Activated B cell treated with CpG ODN at 0.5 μM for 24 hours (primary cell): ENCODE measurements at regions of chr3 and their contacts with region 1.

Region 1: DNA sequence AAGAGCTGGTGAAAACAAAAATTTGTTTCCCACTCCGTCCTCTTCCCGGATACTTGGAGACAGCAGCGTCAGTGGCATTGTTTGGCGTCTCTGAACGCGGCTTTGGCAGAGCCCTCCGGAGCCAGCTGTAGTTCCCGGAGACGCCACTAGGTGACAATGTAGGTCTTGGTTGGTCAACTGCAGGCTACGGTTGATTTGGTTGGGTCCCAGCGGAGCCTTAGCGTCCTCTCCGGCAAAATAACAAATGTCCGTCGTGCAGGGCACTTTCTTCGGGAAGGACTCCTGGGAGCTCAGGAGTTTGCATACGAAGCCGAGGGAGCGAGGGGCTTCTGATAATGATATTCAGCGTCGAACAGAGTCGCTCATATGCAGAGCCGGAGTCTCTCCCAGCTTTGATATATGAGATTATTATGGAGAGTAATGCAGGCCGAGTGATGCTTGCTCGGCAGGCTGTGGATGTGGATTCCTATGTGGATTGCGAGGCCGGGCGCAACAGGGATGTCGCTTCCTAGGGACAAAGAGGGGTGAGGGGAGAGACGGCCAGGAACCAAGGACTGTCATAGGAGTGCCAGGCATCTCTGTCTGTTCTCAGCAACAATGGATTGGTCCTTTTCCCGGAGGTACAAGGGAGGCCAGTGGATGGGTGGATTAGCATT is 74.8 kb downstream of the IL20RB start:
- DNase-seq: peak; percentile 61
- ATAC-seq: peak; percentile 85
- H3K4me3 Mint-ChIP-seq: peak overlapping the region; percentile 68
- H3K27ac Mint-ChIP-seq: no peak overlapping the region
- H3K4me1 Mint-ChIP-seq: peaks cover 7% of the 10 kb centered on the region
- H3K27me3 Mint-ChIP-seq: peaks cover 32% of the 10 kb centered on the region
- CTCF ChIP-seq: peak; percentile 97

Region 2: DNA sequence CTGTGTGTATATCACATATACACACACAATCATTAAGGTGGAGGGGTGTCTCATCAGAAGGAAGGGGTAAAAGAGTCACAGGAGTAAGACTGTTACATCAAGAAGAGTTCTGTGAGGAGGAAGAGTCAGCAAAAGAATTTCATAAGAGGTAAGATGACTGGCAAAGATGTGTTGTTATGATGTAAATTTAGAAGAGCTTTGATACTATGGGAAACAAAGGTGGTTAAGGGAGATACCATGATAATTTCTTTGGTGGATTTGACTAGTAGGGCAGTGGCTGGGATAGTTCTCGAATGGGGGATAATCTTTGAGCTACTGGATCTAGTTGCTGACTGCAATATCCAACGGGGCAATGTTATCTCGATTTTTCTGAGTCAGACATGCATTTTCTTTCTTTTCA is 342.0 kb before region 1 on chr3:
- CTCF ChIA-PET with region 1: no interaction called
- POLR2A ChIA-PET with region 1: no interaction called
- intact Hi-C with region 1: no loop called
- DNase-seq: no peak
- ATAC-seq: no peak
- H3K4me3 Mint-ChIP-seq: no peak overlapping the region
- H3K27ac Mint-ChIP-seq: no peak overlapping the region
- H3K4me1 Mint-ChIP-seq: peaks cover 34% of the 10 kb centered on the region
- H3K27me3 Mint-ChIP-seq: no peaks in the 10 kb centered on the region
- CTCF ChIP-seq: no peak

Region 3: DNA sequence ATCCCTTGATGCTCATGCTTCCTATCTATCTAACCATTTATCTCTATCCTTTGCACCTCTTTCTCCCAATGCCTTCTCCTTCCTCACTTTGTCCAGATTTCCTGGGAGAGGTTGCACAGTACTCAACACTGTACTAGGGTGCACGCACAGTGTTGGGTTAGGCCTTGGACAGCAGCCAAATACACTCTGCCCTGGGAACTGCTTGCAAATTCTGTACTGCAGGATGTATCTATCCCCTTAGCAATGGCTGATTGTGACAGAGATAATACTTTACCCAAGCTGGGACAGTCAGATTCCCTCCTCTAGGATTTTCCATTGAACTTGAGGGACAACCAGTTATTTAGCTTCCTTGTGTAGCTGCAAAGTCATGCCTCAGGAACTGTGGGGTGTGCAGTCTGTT is 38.5 kb after region 1 on chr3:
- CTCF ChIA-PET with region 1: no interaction called
- POLR2A ChIA-PET with region 1: no interaction called
- intact Hi-C with region 1: no loop called
- DNase-seq: no peak
- ATAC-seq: no peak
- H3K4me3 Mint-ChIP-seq: no peak overlapping the region
- H3K27ac Mint-ChIP-seq: no peak overlapping the region
- H3K4me1 Mint-ChIP-seq: no peaks in the 10 kb centered on the region
- H3K27me3 Mint-ChIP-seq: peaks cover 17% of the 10 kb centered on the region
- CTCF ChIP-seq: no peak

Region 4: DNA sequence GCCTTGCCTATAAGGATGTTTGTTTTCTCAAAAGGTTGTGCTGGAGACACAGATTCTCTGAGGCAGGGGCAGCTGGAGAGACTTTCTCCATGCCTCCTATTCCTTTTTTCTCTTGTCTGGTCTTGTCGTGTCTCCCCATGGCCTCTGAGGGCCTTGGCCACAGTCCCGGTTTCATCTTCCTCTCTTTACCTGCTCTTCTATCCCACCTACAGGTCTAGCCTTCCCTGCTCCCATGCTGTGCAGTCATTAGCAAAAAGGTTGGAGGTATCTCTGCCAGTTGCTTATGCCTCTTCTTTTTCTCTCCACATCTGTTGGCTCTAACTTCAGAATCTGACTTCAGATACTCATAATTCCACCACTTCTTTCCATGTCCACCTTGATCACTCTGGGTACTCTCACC is 116.3 kb after region 1 on chr3:
- CTCF ChIA-PET with region 1: no interaction called
- POLR2A ChIA-PET with region 1: no interaction called
- intact Hi-C with region 1: no loop called
- DNase-seq: no peak
- ATAC-seq: no peak
- H3K4me3 Mint-ChIP-seq: no peak overlapping the region
- H3K27ac Mint-ChIP-seq: no peak overlapping the region
- H3K4me1 Mint-ChIP-seq: no peaks in the 10 kb centered on the region
- H3K27me3 Mint-ChIP-seq: peaks cover 2% of the 10 kb centered on the region
- CTCF ChIP-seq: no peak

Region 5: GRCh38 chr3:137217733-137218132 is 185.1 kb after region 1 on chr3:
- CTCF ChIA-PET with region 1: no interaction called
- POLR2A ChIA-PET with region 1: no interaction called
- intact Hi-C with region 1: no loop called
- DNase-seq: no peak
- ATAC-seq: no peak
- H3K4me3 Mint-ChIP-seq: no peak overlapping the region
- H3K27ac Mint-ChIP-seq: no peak overlapping the region
- H3K4me1 Mint-ChIP-seq: no peaks in the 10 kb centered on the region
- H3K27me3 Mint-ChIP-seq: no peaks in the 10 kb centered on the region
- CTCF ChIP-seq: no peak

Region 6: DNA sequence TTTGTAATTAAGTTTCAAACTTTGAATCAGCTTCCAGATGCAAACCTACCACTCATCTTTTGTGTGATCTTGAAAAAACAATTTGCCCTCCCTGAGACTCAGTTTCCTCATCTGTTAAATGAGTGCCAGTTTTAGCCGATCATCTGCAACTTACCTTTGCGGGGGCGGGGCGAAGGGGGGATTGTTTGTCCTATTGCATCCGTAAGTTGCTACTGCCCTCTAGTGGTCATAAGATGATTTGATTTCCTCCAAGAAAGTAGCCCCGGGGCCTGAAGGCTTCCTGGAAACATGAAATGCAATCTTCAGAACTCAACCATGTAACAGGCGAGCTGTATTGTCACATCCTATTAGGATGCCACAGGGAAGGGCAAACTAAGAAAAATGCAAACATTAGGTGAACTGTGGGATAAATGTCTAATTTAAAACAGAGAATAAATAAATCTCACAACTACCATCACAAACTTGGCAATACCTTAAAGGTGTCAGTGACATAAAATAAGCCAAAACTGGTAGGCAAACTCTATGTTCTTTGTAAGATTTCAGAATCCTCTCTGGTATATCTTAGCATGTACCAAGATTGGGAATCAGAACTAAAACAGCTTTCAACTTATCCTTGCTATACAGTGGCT is 913.9 kb after region 1 on chr3:
- CTCF ChIA-PET with region 1: no interaction called
- POLR2A ChIA-PET with region 1: no interaction called
- intact Hi-C with region 1: loop called (anchors 1 kb)
- DNase-seq: no peak
- ATAC-seq: no peak
- H3K4me3 Mint-ChIP-seq: no peak overlapping the region
- H3K27ac Mint-ChIP-seq: no peak overlapping the region
- H3K4me1 Mint-ChIP-seq: peaks cover 2% of the 10 kb centered on the region
- H3K27me3 Mint-ChIP-seq: no peaks in the 10 kb centered on the region
- CTCF ChIP-seq: no peak

Region 7: DNA sequence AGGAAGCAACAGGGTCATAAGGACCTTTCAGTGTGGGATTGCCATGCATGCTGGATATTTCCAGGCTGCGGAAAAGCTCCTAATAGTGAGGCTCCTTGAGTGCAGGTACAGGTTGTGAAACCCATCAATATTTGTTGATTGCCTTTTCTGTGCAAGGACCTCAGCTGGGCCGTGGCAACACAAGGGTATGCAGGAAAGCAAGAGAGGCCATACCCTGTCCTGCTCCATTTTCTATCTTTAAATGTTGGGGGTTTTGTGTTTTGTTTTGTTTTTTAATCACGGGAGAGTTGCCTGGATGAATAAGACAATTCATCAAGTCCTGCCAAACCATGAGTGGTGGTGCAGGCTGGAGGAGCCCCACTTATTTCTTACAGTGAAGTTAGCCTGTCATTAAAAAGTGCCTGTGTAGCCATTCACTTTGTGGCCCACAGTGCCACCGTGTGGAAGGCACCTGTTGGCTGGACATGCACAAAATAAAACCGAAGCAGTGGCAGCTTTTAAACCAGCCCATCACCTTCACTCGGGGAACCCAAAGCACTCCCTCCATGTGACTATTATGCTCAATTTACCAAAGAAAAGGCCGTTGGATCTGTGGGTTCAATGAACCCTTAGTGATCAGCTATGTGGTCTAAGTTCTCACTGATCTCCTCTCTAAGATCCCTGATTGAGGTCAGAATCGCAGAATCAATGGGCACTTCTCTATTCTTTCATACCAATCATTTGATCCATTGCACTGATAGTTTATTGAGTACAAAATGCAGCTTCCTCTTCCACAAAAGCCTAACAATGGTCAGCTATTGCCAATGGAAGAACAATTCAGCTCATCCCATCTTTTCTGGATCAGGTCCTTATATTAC is 1019.6 kb after region 1 on chr3:
- CTCF ChIA-PET with region 1: no interaction called
- POLR2A ChIA-PET with region 1: no interaction called
- intact Hi-C with region 1: loop called (anchors 1 kb)
- DNase-seq: no peak
- ATAC-seq: no peak
- H3K4me3 Mint-ChIP-seq: no peak overlapping the region
- H3K27ac Mint-ChIP-seq: no peak overlapping the region
- H3K4me1 Mint-ChIP-seq: no peaks in the 10 kb centered on the region
- H3K27me3 Mint-ChIP-seq: peaks cover 31% of the 10 kb centered on the region
- CTCF ChIP-seq: no peak